Mammary epithelial cell (primary cell): ENCODE measurements at regions of chr10 and their contacts with region 1.

Region 1: DNA sequence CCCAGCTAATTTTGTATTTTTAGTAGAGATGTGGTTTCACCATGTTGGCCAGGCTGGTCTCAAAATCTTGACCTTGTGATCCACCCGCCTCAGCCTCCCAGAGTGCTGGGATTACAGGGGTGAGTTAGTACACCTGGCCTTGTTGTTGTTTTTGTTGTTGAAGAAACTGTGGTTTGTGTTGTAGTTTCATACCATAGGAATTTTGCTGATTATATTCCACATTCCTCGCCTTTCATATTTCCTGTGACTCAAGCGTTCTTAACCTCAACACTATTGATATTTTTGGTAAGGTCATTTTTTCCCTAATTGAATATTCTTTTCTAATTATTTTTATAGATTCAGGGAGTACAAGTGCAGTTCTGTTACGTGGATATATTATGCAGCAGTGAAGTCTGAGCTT is 16.7 kb downstream of the LIPF start:
- DNase-seq: peak; percentile 5
- H3K4me3 ChIP-seq: no peak overlapping the region
- H3K27ac ChIP-seq: no peak overlapping the region
- H3K4me1 ChIP-seq: peaks cover 4% of the 10 kb centered on the region
- H3K27me3 ChIP-seq: no peaks in the 10 kb centered on the region
- CTCF ChIP-seq: no peak

Region 2: DNA sequence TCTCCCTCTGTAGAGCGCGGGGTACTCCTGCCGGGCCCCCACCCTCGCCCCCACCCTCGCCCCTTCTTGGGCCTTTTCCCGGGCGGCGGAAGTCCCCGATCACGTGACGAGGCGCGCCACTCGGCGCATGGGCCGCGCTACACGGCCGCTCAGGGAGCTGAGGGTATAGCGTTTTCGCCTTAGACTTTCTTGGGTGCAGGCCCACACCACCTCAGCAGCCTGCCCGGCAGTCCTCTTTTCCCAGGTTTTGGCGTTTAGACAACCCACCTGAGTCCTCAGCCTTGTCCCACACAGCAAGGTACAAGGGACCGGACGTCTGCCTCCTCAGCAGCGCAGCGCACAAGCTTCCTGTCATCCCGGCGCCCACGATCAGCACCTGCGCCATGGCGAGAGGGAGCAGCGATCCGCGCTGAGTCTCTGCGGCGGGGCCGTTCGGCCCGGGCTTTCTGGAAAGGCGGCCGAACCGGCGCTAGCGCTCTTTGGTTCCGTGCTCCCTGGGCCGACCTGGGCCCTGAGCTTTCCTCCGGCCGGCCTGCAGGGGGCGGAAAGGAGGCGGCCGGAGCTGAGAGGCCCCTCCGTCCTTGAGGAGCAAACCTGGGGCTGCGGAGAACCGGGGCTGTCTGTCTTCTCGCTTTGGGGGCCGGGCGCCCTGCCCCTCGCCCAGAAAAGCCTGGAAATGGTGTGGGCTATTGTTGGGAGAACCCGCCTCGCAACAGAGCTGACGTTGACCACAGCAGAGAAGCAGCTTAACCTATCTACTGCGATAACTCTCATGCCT is 98.0 kb before region 1 on chr10 and contains the start of gene RNLS:
- CTCF ChIA-PET with region 1: no interaction called
- dilution Hi-C with region 1: no loop called
- in situ Hi-C with region 1: no loop called
- intact Hi-C with region 1: loop called (anchors 5 kb)
- DNase-seq: peak; percentile 33
- H3K4me3 ChIP-seq: peak within 1 kb of the TSS; percentile 44 to 68 (median 58)
- H3K27ac ChIP-seq: no peak within 1 kb of the TSS
- H3K4me1 ChIP-seq: peaks cover 9% of the 10 kb centered on the region
- H3K27me3 ChIP-seq: no peaks in the 10 kb centered on the region
- CTCF ChIP-seq: peak; percentile 52 to 74
- total RNA-seq, gene RNLS: 3.3 to 13.0 TPM